ENCODE measurements at regions of chr9 and their contacts with region 1.

Region 1: DNA sequence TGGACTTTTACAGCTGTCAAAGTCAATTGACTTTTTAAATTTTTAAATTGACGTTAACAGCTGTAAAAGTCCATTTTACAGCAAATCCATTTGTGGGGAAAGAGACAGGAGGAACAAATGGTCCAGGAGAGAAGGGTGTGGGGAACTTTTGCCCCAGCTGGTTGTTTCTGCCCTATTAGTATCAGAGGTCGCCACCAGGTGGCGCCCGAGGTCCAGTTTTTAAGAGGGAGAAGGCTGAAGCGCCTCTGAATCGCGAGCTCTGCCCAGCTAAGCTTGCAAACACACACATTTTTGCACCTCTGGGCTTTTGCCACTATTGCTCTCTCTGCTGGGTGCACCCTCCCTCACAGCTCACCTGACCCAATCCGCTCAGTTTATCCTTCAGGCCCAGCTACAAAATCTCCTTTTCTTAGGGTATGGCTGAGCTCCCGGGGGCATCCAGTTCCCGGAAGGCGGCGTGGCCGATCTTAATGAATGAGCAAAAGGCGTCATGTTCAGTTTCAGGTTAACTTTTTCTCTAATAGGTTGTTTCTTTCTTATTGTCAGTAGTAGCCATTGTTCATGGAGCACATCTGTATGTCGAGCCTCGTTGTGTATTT is 6.3 kb upstream of the TTLL11 start:
- DNase-seq: peak; percentile 47 to 92
- H3K4me3 ChIP-seq: no peak overlapping the region
- H3K27ac ChIP-seq: no peak overlapping the region
- H3K4me1 ChIP-seq: no peaks in the 10 kb centered on the region
- H3K27me3 ChIP-seq: peaks cover 0 to 2% (median under 1%) of the 10 kb centered on the region in 4 experiments; a peak in 3 of 7 replicates
- CTCF ChIP-seq: peak; percentile 65 to 95 (median 74)
- EP300 ChIP-seq: no peak
- POLR2A ChIP-seq: no peak
- RAD21 ChIP-seq: peak; percentile 89 to 92

Region 2: GRCh38 chr9:122087406-122088200 is 11.8 kb before region 1 on chr9:
- CTCF ChIA-PET with region 1: interaction called, 11 read pairs
- POLR2A ChIA-PET with region 1: no interaction called
- DNase-seq: no peak
- H3K4me3 ChIP-seq: no peak overlapping the region
- H3K27ac ChIP-seq: no peak overlapping the region
- H3K4me1 ChIP-seq: peaks cover 0 to 5% (median 0%) of the 10 kb centered on the region in 4 experiments; a peak in 4 of 7 replicates
- H3K27me3 ChIP-seq: peaks cover 0 to 10% (median 9%) of the 10 kb centered on the region in 4 experiments; a peak in 5 of 7 replicates
- CTCF ChIP-seq: no peak
- EP300 ChIP-seq: no peak
- POLR2A ChIP-seq: no peak
- RAD21 ChIP-seq: no peak

Region 3: DNA sequence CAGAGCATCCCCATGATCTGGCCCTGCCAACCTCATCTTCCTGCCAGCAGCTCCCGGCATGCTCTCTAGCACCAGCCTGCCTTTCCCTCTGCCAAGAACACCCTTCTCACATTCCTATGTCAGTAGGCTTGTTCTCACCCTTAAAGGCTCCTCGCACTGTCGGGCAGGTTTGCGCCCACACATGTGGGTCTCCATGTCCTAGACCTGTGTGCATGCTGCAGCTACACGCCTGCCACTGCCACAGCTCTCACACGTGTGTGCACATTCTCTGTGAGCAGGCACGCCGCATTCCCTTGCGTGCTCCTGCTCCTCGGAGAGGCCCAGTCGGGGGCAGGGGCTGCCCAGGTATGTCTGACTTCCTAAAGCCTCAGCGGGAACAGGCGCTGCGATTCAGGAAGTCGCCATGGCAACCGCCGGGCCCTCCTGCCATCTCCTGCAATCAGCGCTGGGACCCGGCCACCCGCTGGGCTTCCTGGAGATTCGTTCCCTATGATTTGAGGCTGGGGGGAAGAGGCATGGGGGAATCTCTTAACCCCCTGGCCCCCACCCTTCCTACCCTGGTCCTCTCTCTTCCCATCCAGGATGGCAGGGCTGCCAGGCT is 32.1 kb after region 1 on chr9:
- CTCF ChIA-PET with region 1: interaction called, 405 read pairs
- POLR2A ChIA-PET with region 1: no interaction called
- DNase-seq: peak in 1 of 2 experiments; percentile 81
- H3K4me3 ChIP-seq: peak overlapping the region in 2 of 4 experiments; percentile 19 to 31; a peak in 4 of 8 replicates
- H3K27ac ChIP-seq: no peak overlapping the region
- H3K4me1 ChIP-seq: peaks cover 14 to 21% (median 17%) of the 10 kb centered on the region in 4 experiments
- H3K27me3 ChIP-seq: peaks cover 0 to 17% (median 14%) of the 10 kb centered on the region in 4 experiments; a peak in 6 of 7 replicates
- CTCF ChIP-seq: no peak
- EP300 ChIP-seq: no peak
- POLR2A ChIP-seq: no peak
- RAD21 ChIP-seq: no peak

Region 4: GRCh38 chr9:122338994-122339393 is 239.6 kb after region 1 on chr9:
- CTCF ChIA-PET with region 1: interaction called, 124 read pairs
- POLR2A ChIA-PET with region 1: no interaction called
- DNase-seq: no peak
- H3K4me3 ChIP-seq: no peak overlapping the region
- H3K27ac ChIP-seq: no peak overlapping the region
- H3K4me1 ChIP-seq: peaks cover 18 to 44% (median 28%) of the 10 kb centered on the region in 4 experiments
- H3K27me3 ChIP-seq: 0 out of 7 replicates have a peak, but pooled peaks cover 0 to 2% (median 0%) of the 10 kb centered on the region in 4 experiments
- CTCF ChIP-seq: no peak
- EP300 ChIP-seq: no peak
- POLR2A ChIP-seq: no peak
- RAD21 ChIP-seq: no peak

Region 5: DNA sequence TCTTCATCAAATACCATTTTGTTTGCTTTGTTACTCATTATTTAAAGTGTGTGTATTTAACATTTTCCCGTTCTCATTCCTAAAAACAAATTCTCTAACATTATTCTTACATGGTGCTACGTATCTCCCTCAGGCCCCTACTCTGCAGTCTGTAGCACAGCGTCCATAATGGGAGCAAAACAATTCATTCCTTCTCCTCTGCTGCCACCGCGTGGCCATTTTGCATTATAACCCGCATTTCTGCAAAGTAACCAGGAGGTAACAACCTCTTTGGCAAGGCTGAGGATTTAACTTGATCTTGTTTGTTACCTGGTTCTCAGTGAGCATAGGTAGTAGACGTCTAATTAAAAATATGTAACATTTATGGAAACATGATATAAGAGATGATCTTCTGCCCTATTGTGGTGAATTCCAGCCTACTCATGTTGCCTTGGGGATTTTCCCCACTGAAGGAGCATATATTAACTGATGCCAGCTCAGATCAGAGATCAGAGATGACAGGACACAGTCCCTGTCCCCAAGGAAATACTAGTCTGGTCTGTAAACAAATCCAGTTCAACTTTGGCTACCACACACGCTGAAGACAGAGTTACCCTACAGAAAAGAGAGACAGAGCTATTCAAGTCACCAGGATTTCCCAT is 711.1 kb after region 1 on chr9:
- CTCF ChIA-PET with region 1: interaction called, 23 read pairs
- POLR2A ChIA-PET with region 1: no interaction called
- DNase-seq: peak; percentile 29 to 81
- H3K4me3 ChIP-seq: no peak overlapping the region
- H3K27ac ChIP-seq: no peak overlapping the region
- H3K4me1 ChIP-seq: peaks cover 0 to 3% (median 2%) of the 10 kb centered on the region in 4 experiments; a peak in 4 of 7 replicates
- H3K27me3 ChIP-seq: no peaks in the 10 kb centered on the region
- CTCF ChIP-seq: peak; percentile 49 to 87 (median 84)
- EP300 ChIP-seq: no peak
- POLR2A ChIP-seq: no peak
- RAD21 ChIP-seq: peak; percentile 97